ENCODE measurements at regions of chr15 and their contacts with region 1.

Region 1: GRCh38 chr15:85730001-85730820 is 64.5 kb downstream of the KLHL25 start:
- DNase-seq: no peak

Region 2: GRCh38 chr15:85667491-85668424 is 62.5 kb before region 1 on chr15:
- intact Hi-C with region 1: no loop called
- DNase-seq: no peak

Region 3: GRCh38 chr15:85840065-85840801 is 110.0 kb after region 1 on chr15:
- intact Hi-C with region 1: loop called (anchors 1 kb)
- DNase-seq: peak; percentile 59 to 96 (median 79)

Region 4: DNA sequence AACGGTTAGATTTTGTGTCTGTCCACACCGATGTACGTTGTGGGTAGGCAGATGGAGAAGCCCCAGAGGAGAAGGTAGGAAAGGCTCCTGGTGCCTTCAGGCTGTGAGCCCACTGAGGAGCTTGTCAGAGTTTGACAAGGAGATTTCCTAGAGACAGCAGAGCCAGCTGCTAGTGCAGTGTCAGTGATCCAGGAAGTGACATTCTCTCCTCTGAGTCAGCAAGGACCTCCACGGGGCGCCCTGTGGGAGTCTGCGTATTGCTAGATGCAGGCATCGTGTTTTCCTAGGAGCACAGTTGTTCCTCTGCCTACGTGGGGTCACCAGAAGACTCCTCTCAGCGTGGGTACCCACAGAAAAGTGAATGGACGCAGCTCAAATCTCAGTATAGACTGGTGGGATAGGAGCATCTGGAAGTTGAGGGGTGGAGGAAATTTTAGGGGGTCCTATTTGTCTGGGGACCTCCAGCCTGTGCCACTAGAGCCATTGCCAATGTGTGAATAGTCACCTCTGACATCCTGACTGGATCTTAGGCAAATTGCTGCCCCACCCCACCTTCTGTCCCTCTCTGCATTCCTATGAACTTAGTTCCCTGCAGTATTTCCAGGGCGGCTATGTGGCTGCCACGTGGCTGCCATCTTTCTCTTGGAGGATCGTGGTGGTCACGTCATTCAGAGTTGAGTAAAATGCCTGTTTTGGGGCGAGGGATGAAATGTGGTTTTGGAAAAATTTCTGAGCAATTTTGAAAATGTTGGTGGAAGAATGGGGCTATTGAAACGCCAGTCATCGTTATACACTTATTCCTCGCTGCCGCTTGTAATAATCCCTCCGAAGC is 149.3 kb after region 1 on chr15:
- intact Hi-C with region 1: no loop called
- DNase-seq: no peak

Region 5: GRCh38 chr15:85920956-85921355 is 190.7 kb after region 1 on chr15:
- intact Hi-C with region 1: no loop called
- DNase-seq: no peak

Measured in posterior cingulate gyrus (tissue), 11 donors.